Dorsolateral prefrontal cortex (tissue), 120 donors: ENCODE measurements at regions of chr9 and their contacts with region 1.

Region 1: GRCh38 chr9:16434526-16434925 is 435.9 kb downstream of the BNC2 start:
- DNase-seq: no peak
- H3K4me3 ChIP-seq: no peak overlapping the region
- H3K27ac ChIP-seq: no peak overlapping the region
- H3K27me3 ChIP-seq: peaks cover 0 to 4% (median 0%) of the 10 kb centered on the region in 45 donors
- CTCF ChIP-seq: no peak

Region 2: GRCh38 chr9:16484744-16485143 is 50.2 kb after region 1 on chr9:
- intact Hi-C with region 1: loop called in 1 of 2 experiments (anchors 5 kb)
- DNase-seq: no peak
- H3K4me3 ChIP-seq: no peak overlapping the region
- H3K27ac ChIP-seq: no peak overlapping the region
- H3K27me3 ChIP-seq: peaks cover 0 to 7% (median 0%) of the 10 kb centered on the region in 45 donors
- CTCF ChIP-seq: no peak